T-cell (primary cell): ENCODE measurements at regions of chr14 and their contacts with region 1.

Region 1: GRCh38 chr14:70907176-70907995 is at the start of gene PCNX1:
- DNase-seq: peak; percentile 86 to 94 (median 90)
- ATAC-seq: peak; percentile 78 to 82 (median 80)
- H3K4me3 ChIP-seq: peak within 1 kb of the TSS; percentile 76 to 98
- H3K4me3 Mint-ChIP-seq: peak within 1 kb of the TSS; percentile 88 to 94 (median 93)
- H3K27ac ChIP-seq: peak within 1 kb of the TSS; percentile 90
- H3K27ac Mint-ChIP-seq: peak within 1 kb of the TSS; percentile 95 to 99
- H3K4me1 ChIP-seq: peaks cover 15 to 17% of the 10 kb centered on the region in 2 experiments
- H3K4me1 Mint-ChIP-seq: peaks cover 52 to 68% (median 64%) of the 10 kb centered on the region in 3 donors
- H3K27me3 ChIP-seq: no peaks in the 10 kb centered on the region
- H3K27me3 Mint-ChIP-seq: no peaks in the 10 kb centered on the region
- total RNA-seq, gene PCNX1: 80.8 to 140 (median 86.3) TPM

Region 2: GRCh38 chr14:70809543-70810244 is 97.7 kb before region 1 on chr14:
- CTCF ChIA-PET with region 1: interaction called in 1 of 2 experiments, 10 read pairs
- POLR2A ChIA-PET with region 1: no interaction called
- DNase-seq: peak; percentile 67 to 91 (median 78)
- ATAC-seq: peak; percentile 83 to 88 (median 84)
- H3K4me3 ChIP-seq: peak overlapping the region; percentile 51 to 82
- H3K4me3 Mint-ChIP-seq: no peak overlapping the region
- H3K27ac ChIP-seq: peak overlapping the region; percentile 64
- H3K27ac Mint-ChIP-seq: peak overlapping the region in 1 of 2 donors; percentile 85
- H3K4me1 ChIP-seq: peaks cover 3 to 17% of the 10 kb centered on the region in 2 experiments
- H3K4me1 Mint-ChIP-seq: peaks cover 9 to 14% (median 10%) of the 10 kb centered on the region in 3 donors
- H3K27me3 ChIP-seq: peaks cover 0 to 3% of the 10 kb centered on the region in 2 experiments
- H3K27me3 Mint-ChIP-seq: peaks cover 0 to 5% of the 10 kb centered on the region in 2 donors

Region 3: DNA sequence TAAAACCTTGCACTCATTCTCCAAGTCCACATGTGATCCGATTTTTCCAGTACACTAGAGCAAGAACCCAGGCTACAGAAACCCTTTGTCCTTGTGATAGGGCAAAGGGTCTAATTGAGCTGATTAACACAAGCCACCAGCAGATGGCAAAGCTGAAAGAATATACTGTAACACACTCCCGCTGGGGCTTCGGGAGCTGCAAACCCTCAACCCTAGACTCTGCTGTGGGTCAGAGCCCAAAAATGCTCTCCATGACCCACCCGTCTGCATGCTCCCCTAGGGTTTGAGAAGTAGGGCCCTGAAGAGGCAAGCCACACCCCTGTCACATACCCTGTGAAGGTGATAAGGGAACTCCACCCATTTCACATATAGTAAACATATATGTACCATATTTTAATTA is 33.8 kb before region 1 on chr14:
- CTCF ChIA-PET with region 1: interaction called in 1 of 2 experiments, 14 read pairs
- POLR2A ChIA-PET with region 1: interaction called in 1 of 2 experiments, 4 read pairs
- DNase-seq: peak in 6 of 35 experiments; percentile 10 to 44 (median 20)
- ATAC-seq: peak in 3 of 4 experiments; percentile 36 to 68 (median 59)
- H3K4me3 ChIP-seq: no peak overlapping the region
- H3K4me3 Mint-ChIP-seq: no peak overlapping the region
- H3K27ac ChIP-seq: no peak overlapping the region
- H3K27ac Mint-ChIP-seq: peak overlapping the region; percentile 49 to 78
- H3K4me1 ChIP-seq: peaks cover 0 to 16% of the 10 kb centered on the region in 2 experiments
- H3K4me1 Mint-ChIP-seq: peaks cover 17 to 25% (median 22%) of the 10 kb centered on the region in 3 donors
- H3K27me3 ChIP-seq: no peaks in the 10 kb centered on the region
- H3K27me3 Mint-ChIP-seq: no peaks in the 10 kb centered on the region

Region 4: DNA sequence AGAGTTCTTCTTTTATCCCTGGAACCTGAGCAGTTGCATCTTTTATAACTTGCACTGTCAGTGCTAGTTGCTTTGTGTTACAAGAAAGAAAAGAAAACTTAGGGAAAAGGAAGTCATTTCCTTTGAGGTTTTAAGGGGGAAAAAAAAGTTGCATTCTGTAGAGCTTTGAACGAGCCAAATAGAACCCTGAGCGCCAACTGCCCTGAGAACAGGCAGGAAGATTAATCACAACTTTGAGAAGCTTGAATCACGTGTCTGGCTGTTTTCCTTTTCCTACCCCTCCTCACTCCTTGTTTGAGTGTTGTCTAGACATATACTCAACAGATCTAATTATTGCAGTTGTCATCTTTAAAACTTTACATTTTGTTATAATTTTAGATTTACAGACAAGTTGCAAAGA is 12.4 kb after region 1 on chr14:
- CTCF ChIA-PET with region 1: interaction called, 10 to 23 read pairs
- POLR2A ChIA-PET with region 1: interaction called, 8 to 12 read pairs
- DNase-seq: peak in 1 of 35 experiments; percentile 39
- ATAC-seq: peak; percentile 25 to 53 (median 49)
- H3K4me3 ChIP-seq: no peak overlapping the region
- H3K4me3 Mint-ChIP-seq: peak overlapping the region; percentile 52 to 64 (median 55)
- H3K27ac ChIP-seq: peak overlapping the region; percentile 54
- H3K27ac Mint-ChIP-seq: peak overlapping the region; percentile 89 to 92
- H3K4me1 ChIP-seq: peaks cover 18 to 31% of the 10 kb centered on the region in 2 experiments
- H3K4me1 Mint-ChIP-seq: peaks cover 93 to 96% (median 93%) of the 10 kb centered on the region in 3 donors
- H3K27me3 ChIP-seq: no peaks in the 10 kb centered on the region
- H3K27me3 Mint-ChIP-seq: no peaks in the 10 kb centered on the region

Region 5: DNA sequence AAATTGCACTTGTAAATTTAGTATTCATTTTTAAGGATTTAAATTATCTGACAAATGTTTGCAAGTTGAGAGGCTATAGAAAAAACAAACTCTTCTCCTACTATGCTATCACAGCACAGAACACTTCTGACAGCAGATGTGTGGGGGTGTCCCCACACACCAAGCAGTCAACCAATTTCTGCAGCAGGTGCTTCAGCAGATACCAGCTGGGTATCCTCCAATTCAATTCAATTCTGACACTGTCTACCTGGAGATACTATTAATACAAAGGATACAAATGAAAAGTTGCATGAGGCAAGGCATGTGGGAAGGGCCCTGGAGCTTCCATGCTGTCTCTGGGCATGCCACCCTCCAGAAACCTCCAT is 34.9 kb after region 1 on chr14:
- CTCF ChIA-PET with region 1: interaction called in 1 of 2 experiments, 25 read pairs
- POLR2A ChIA-PET with region 1: interaction called in 1 of 2 experiments, 4 read pairs
- DNase-seq: no peak
- ATAC-seq: peak in 2 of 4 experiments; percentile 36 to 48
- H3K4me3 ChIP-seq: no peak overlapping the region
- H3K4me3 Mint-ChIP-seq: peak overlapping the region; percentile 14 to 80 (median 37)
- H3K27ac ChIP-seq: peak overlapping the region; percentile 65
- H3K27ac Mint-ChIP-seq: peak overlapping the region; percentile 98 to 99
- H3K4me1 ChIP-seq: peaks cover 0 to 28% of the 10 kb centered on the region in 2 experiments
- H3K4me1 Mint-ChIP-seq: peaks cover 83 to 89% (median 86%) of the 10 kb centered on the region in 3 donors
- H3K27me3 ChIP-seq: no peaks in the 10 kb centered on the region
- H3K27me3 Mint-ChIP-seq: no peaks in the 10 kb centered on the region

Region 6: GRCh38 chr14:70972107-70972976 is 65.0 kb after region 1 on chr14:
- CTCF ChIA-PET with region 1: interaction called in 1 of 2 experiments, 36 read pairs
- POLR2A ChIA-PET with region 1: no interaction called
- DNase-seq: peak; percentile 57 to 93 (median 79)
- ATAC-seq: peak; percentile 76 to 84 (median 82)
- H3K4me3 ChIP-seq: no peak overlapping the region
- H3K4me3 Mint-ChIP-seq: no peak overlapping the region
- H3K27ac ChIP-seq: no peak overlapping the region
- H3K27ac Mint-ChIP-seq: peak overlapping the region; percentile 63 to 66
- H3K4me1 ChIP-seq: peaks cover 4 to 6% of the 10 kb centered on the region in 2 experiments
- H3K4me1 Mint-ChIP-seq: peaks cover 50 to 61% (median 58%) of the 10 kb centered on the region in 3 donors
- H3K27me3 ChIP-seq: no peaks in the 10 kb centered on the region
- H3K27me3 Mint-ChIP-seq: no peaks in the 10 kb centered on the region